Dendritic cell treated with granulocyte-macrophage colony-stimulating factor and Interleukin-4, amounts not matched to agents 40 ng/mL and 50 ng/mL, for 4 days (primary cell): ENCODE measurements at regions of chr3 and their contacts with region 1.

Region 1: GRCh38 chr3:46923559-46924350 is 46.2 kb downstream of the PTH1R start:
- H3K4me3 Mint-ChIP-seq: peak overlapping the region; percentile 7
- H3K27ac Mint-ChIP-seq: peak overlapping the region; percentile 45
- H3K4me1 Mint-ChIP-seq: peaks cover 51% of the 10 kb centered on the region
- H3K27me3 Mint-ChIP-seq: no peaks in the 10 kb centered on the region

Region 2: DNA sequence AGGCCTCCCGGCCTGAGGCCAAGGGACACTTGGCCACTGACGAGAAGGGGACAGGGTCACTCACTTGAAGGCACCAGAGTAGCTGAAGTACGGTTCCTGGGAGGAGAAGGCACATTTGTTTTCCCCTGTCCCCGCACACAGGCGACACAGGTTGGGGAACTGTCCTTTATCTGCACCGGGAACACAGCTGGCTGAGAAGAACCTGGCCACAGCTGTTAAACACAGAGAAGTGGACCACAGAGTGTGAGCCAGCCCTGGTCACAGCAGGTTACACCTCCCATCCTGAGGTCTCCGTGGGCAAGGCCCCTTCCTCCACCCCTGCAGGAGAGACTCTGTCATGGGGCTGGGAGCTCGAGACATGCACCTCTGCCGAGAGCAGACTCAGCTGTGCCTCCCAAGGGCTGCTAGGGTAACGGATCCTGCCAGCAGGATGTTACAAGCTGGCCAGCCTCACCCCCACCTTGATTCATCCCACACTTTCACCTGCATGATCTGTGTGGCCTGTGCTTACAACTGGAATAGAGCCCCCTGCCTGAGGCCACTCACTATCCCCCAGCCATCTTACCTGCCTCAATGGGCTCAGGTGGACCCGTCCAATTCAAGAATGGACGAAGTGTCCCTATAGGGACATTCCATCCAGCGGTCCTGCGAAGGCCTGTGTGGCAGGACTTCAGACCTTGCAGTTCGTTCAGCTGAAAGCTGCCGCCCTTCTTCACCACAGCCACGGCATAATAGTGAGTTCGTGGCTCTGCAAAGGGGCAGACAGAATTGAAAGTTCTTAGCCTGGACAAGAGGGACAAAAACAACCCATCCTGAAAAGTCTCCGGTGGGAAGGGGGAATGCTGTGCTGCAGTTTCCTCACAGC is 468.3 kb before region 1 on chr3:
- intact Hi-C with region 1: no loop called
- H3K4me3 Mint-ChIP-seq: no peak overlapping the region
- H3K27ac Mint-ChIP-seq: no peak overlapping the region
- H3K4me1 Mint-ChIP-seq: no peaks in the 10 kb centered on the region
- H3K27me3 Mint-ChIP-seq: peaks cover 28% of the 10 kb centered on the region

Region 3: DNA sequence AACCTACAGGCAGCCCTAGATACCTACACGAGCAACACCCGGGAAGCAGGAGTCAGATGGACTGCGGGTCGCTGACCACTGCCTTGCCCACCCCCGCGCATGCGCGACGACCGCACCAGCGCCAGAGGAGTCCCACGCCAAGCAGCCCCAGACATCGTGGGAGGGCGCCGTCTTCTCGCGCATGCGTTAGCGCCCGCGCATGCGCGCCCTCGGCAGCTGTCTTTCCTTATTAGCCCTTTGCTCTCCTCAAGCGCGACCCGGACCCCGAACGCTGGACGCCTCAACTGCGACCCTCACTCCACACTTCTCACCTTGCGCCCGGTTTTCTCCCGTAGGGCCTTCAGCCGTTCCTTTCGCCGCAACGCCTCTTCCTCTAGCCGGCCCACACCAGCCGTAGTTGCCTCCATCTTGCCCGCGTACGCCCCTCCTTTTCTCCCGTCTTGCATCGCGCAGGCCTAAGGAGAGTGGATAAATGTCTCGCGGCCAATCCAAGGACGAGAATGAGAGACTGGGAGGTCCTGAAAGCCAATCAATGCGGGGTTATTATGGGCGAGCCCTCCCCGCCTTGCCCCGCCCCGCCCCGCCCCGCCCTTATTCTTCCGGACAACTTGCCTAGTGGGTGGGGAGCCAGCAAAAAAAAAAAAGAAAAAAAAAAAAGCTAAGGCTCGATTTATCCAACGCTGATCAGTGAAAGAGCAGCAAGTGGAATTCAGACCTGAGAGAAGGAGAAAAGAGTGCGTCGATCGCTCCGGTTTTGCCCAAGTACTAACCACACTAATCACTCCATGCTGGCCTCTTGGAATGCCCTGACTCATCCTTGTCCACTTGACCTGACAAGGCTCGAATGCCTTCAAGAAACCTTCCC is 52.8 kb after region 1 on chr3 and contains the start of gene CCDC12:
- intact Hi-C with region 1: loop called (anchors 5 kb)
- H3K4me3 Mint-ChIP-seq: peak within 1 kb of the TSS; percentile 86
- H3K27ac Mint-ChIP-seq: peak within 1 kb of the TSS; percentile 94
- H3K4me1 Mint-ChIP-seq: peaks cover 69% of the 10 kb centered on the region
- H3K27me3 Mint-ChIP-seq: no peaks in the 10 kb centered on the region

Region 4: DNA sequence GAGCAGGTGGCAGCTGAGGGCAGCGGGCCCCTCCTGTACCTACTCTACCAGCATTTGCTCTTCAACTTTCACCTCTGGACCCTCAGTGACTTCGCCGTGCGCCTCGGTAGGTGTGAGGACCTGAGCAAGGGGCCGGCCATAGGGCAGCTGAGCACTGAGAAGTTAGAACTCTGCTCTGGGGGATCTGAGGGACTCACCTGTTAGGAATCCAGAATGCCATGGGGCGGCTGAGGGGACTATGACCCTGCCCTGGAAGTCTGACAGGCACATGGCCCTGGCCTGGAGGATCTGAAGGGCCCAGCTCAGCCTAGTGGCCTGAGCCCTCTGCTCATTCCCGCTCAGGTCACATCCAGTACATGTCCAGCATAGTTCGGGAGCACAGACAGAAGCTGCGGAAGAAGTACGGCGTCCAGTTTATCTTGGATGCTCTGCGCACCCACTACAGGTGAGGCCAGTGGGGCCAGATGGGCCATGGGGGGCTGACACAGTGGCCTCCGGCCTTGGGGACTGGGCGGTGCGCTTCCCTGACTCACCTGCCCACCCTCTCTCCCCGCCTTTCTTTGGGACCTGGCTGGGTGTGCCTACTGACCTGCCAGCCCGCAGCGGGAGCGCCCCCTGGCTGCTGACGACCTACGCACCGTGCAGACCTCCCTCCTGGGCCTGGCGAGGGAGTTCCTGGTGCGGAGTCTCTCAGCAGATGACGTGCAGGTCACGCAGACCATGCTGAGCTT is 74.5 kb after region 1 on chr3:
- intact Hi-C with region 1: loop called (anchors 2 kb)
- H3K4me3 Mint-ChIP-seq: no peak overlapping the region
- H3K27ac Mint-ChIP-seq: no peak overlapping the region
- H3K4me1 Mint-ChIP-seq: peaks cover 31% of the 10 kb centered on the region
- H3K27me3 Mint-ChIP-seq: no peaks in the 10 kb centered on the region